ENCODE measurements at regions of chr7 and their contacts with region 1.

Region 1: GRCh38 chr7:73606801-73607691 is 17.3 kb downstream of the MLXIPL start:
- DNase-seq: no peak
- H3K4me3 ChIP-seq: peak overlapping the region; percentile 37
- CTCF ChIP-seq: peak; percentile 91

Region 2: GRCh38 chr7:73578342-73579127 is 28.5 kb before region 1 on chr7 and contains the start of gene TBL2:
- CTCF ChIA-PET with region 1: interaction called, 62 read pairs
- POLR2A ChIA-PET with region 1: no interaction called
- DNase-seq: peak; percentile 77
- H3K4me3 ChIP-seq: peak within 1 kb of the TSS; percentile 91
- CTCF ChIP-seq: peak; percentile 30

Region 3: DNA sequence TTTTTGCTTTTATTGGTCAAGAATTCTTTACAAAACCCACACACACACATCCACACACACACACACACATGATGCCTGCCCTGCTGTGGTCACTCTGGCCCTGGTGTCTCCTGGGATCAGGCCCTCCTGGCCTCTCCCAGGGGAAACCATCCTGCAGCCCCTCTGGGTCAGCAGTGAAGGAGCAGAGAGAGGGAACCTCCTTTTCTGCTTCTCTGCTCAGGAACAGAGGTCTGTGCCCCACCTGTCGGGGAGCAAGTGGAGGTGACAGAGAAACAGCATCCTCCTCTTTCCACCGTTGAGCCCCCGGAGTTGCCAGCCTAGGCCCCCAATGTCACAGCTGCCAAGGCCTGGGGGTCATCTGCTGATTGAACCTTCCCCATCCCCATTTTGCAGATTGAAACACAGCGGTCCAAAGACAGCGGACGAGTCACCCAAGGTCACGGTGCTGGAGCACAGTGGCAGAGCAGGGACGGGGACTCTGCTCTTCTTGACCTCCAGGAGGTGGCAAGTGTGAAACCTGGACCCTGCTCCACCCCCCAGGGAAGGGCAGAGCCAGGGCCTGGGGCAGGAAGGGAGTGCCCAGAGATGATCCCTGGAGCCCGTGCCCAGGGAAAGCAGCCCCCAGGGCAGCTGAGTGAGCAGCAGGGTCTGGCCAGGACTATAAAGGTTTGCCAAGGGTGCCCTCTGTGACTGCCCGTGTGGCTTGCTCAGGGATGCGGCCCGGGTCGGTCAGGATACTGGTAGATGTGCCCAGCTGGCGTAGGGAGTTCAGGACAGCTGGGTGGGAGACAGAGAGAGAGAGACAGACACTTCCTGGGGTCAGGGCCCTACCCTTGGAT is 13.6 kb before region 1 on chr7:
- CTCF ChIA-PET with region 1: interaction called, 62 read pairs
- POLR2A ChIA-PET with region 1: no interaction called
- DNase-seq: no peak
- H3K4me3 ChIP-seq: no peak overlapping the region
- CTCF ChIP-seq: no peak

Region 4: DNA sequence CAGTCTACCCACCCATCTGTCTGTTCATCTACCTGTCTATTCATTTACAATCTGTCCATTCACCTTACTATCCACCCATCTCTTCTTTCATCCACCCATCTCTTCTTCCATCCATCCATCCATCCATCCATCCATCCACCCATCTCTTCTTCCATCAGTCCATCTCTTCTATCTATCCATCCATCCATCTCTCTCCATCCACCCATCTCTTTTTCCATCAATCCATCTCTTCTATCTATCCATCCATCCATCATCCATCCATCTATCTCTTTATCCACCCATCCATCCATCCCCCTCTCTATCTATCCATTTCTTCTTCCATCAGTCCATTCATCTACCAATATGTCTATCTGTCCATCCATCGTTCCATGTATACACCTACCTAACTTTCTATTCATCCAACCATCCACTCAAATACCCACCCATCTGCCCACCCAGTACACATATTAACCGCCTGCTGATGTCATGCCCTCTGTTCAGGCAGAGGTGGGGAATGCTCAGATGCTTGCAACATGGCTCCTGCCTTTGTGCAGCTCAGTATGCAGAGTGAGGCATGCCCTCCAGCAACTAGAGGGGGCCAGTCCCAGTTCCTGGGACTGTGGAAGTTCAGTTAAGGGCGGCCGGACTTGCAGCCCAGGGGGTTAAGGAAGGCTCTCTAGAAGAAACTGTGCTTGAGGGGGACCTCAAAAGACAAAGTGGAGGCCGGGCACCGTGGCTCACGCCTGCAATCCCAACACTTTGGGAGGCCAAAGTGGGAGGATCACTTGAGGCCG is 28.6 kb after region 1 on chr7:
- CTCF ChIA-PET with region 1: interaction called, 15 read pairs
- POLR2A ChIA-PET with region 1: no interaction called
- DNase-seq: no peak
- H3K4me3 ChIP-seq: no peak overlapping the region
- CTCF ChIP-seq: no peak

Region 5: GRCh38 chr7:73701357-73701995 is 94.4 kb after region 1 on chr7:
- CTCF ChIA-PET with region 1: interaction called, 24 read pairs
- POLR2A ChIA-PET with region 1: interaction called, 3 read pairs
- DNase-seq: no peak
- H3K4me3 ChIP-seq: no peak overlapping the region
- CTCF ChIP-seq: peak; percentile 66

Region 6: GRCh38 chr7:73718905-73719805 is 112.1 kb after region 1 on chr7 and contains the start of gene STX1A:
- CTCF ChIA-PET with region 1: interaction called, 219 read pairs
- POLR2A ChIA-PET with region 1: no interaction called
- DNase-seq: no peak
- H3K4me3 ChIP-seq: peak within 1 kb of the TSS; percentile 75
- CTCF ChIP-seq: no peak

Region 7: DNA sequence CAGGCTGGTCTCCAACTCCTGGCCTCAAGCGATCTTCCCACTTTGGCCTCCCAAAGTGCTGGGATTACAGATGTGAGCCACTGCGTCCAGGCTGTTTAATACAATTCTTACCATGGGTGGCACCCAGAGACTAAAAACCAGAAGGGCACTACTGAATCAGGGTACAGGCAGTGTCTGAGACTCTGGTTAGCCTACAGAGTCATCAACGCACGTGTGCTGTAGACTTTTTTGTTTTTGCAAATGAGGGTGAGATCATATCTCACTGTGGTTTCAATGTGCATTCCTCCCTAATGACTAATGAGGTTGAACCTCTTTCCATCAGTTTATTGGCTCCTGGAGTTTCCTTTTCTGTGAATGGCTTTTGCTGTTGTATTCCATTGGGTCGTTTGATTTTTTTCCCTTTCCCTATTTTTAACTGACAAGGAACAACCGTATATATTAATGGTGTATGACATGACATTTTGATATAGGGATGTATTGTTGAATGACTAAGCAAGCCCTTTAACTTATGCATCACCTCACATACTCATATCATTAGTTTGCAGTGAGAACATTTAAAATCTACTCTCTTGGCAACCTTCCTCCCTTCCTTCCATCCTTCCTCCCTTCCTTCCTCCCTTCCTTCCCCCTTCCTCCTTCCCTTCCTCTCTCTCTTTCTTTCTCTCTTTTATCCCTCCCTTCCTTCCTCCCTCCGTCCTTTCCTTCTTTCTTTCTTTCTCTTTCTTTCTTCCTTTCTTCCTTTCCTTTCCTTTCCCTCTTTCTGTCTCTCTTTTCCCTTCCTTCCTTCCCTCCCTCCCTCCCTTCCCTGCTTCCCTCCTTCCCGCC is 244.6 kb after region 1 on chr7:
- CTCF ChIA-PET with region 1: interaction called, 15 read pairs
- POLR2A ChIA-PET with region 1: no interaction called
- DNase-seq: peak; percentile 90
- H3K4me3 ChIP-seq: no peak overlapping the region
- CTCF ChIP-seq: no peak

Measured in AG04449 (cell line).